Activated CD4-positive, alpha-beta memory T cell treated with anti-CD3 and anti-CD28 coated beads for 36 hours (primary cell): ENCODE measurements at regions of chr11 and their contacts with region 1.

Region 1: DNA sequence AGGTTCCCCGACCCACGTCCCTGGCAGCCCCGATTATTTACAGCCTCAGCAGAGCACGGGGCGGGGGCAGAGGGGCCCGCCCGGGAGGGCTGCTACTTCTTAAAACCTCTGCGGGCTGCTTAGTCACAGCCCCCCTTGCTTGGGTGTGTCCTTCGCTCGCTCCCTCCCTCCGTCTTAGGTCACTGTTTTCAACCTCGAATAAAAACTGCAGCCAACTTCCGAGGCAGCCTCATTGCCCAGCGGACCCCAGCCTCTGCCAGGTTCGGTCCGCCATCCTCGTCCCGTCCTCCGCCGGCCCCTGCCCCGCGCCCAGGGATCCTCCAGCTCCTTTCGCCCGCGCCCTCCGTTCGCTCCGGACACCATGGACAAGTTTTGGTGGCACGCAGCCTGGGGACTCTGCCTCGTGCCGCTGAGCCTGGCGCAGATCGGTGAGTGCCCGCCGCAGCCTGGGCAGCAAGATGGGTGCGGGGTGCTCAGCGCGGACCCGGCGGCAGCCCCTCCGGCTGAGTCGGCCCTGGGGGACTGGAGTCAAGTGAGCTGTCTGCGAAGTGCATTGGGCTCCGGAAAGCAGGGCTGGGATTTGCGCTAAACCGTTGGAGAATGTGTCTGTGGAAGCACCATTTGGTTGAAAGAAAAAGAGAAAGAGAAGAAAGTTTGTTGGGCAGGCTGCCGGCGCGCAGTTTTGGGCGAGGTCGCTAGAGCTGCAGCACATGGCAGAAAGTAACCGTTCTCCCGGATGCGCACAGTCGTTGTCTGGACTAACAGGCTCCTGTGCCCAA is at the start of gene CD44:
- DNase-seq: peak; percentile 83
- H3K4me3 Mint-ChIP-seq: peak within 1 kb of the TSS; percentile 88
- H3K27ac Mint-ChIP-seq: peak within 1 kb of the TSS; percentile 97
- H3K4me1 Mint-ChIP-seq: peaks cover 48% of the 10 kb centered on the region
- H3K27me3 Mint-ChIP-seq: no peaks in the 10 kb centered on the region
- total RNA-seq, gene CD44: 440 to 442 TPM

Region 2: GRCh38 chr11:34770171-34770570 is 369.0 kb before region 1 on chr11:
- CTCF ChIA-PET with region 1: no interaction called
- POLR2A ChIA-PET with region 1: no interaction called
- intact Hi-C with region 1: no loop called
- DNase-seq: no peak
- H3K4me3 Mint-ChIP-seq: no peak overlapping the region
- H3K27ac Mint-ChIP-seq: no peak overlapping the region
- H3K4me1 Mint-ChIP-seq: no peaks in the 10 kb centered on the region
- H3K27me3 Mint-ChIP-seq: peaks cover 19% of the 10 kb centered on the region

Region 3: DNA sequence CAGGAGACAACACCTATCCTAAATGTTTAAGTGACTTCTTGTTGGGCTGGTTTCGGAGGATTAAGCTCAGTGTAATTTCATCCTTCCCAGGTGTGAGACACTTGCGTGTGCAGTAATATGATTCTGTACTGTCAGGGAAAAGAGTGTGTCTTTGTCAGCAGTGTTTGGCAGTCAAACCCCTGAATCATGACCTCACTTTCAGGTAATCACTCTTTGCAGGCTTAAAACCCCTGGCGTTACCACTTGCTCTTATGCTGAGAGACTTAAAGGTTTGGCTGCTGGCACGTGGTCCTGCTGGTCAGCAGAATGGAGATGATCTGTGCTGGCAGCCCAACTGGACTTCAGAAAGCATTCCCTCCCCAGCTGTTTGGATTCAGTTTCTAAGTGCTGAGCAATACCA is 279.1 kb before region 1 on chr11:
- CTCF ChIA-PET with region 1: no interaction called
- POLR2A ChIA-PET with region 1: no interaction called
- intact Hi-C with region 1: no loop called
- DNase-seq: no peak
- H3K4me3 Mint-ChIP-seq: no peak overlapping the region
- H3K27ac Mint-ChIP-seq: no peak overlapping the region
- H3K4me1 Mint-ChIP-seq: no peaks in the 10 kb centered on the region
- H3K27me3 Mint-ChIP-seq: no peaks in the 10 kb centered on the region

Region 4: GRCh38 chr11:34997952-34998528 is 141.1 kb before region 1 on chr11:
- CTCF ChIA-PET with region 1: interaction called, 25 read pairs
- POLR2A ChIA-PET with region 1: interaction called, 3 read pairs
- intact Hi-C with region 1: loop called (anchors 1 kb)
- DNase-seq: no peak
- H3K4me3 Mint-ChIP-seq: peak overlapping the region; percentile 7
- H3K27ac Mint-ChIP-seq: peak overlapping the region; percentile 25
- H3K4me1 Mint-ChIP-seq: peaks cover 19% of the 10 kb centered on the region
- H3K27me3 Mint-ChIP-seq: no peaks in the 10 kb centered on the region

Region 5: GRCh38 chr11:35126000-35126878 is 12.9 kb before region 1 on chr11:
- CTCF ChIA-PET with region 1: interaction called, 9 read pairs
- POLR2A ChIA-PET with region 1: interaction called, 9 read pairs
- intact Hi-C with region 1: loop called (anchors 1 kb)
- DNase-seq: peak; percentile 73
- H3K4me3 Mint-ChIP-seq: peak overlapping the region; percentile 41
- H3K27ac Mint-ChIP-seq: peak overlapping the region; percentile 82
- H3K4me1 Mint-ChIP-seq: peaks cover 65% of the 10 kb centered on the region
- H3K27me3 Mint-ChIP-seq: no peaks in the 10 kb centered on the region

Region 6: GRCh38 chr11:35305670-35306382 is 166.7 kb after region 1 on chr11:
- CTCF ChIA-PET with region 1: no interaction called
- POLR2A ChIA-PET with region 1: no interaction called
- intact Hi-C with region 1: no loop called
- DNase-seq: peak; percentile 35
- H3K4me3 Mint-ChIP-seq: no peak overlapping the region
- H3K27ac Mint-ChIP-seq: no peak overlapping the region
- H3K4me1 Mint-ChIP-seq: peaks cover 19% of the 10 kb centered on the region
- H3K27me3 Mint-ChIP-seq: no peaks in the 10 kb centered on the region

Region 7: GRCh38 chr11:35893796-35894475 is 754.8 kb after region 1 on chr11:
- CTCF ChIA-PET with region 1: no interaction called
- POLR2A ChIA-PET with region 1: no interaction called
- intact Hi-C with region 1: no loop called
- DNase-seq: no peak
- H3K4me3 Mint-ChIP-seq: no peak overlapping the region
- H3K27ac Mint-ChIP-seq: no peak overlapping the region
- H3K4me1 Mint-ChIP-seq: no peaks in the 10 kb centered on the region
- H3K27me3 Mint-ChIP-seq: peaks cover 3% of the 10 kb centered on the region